Heart left ventricle (tissue), 16 donors: ENCODE measurements at regions of chr17 and their contacts with region 1.

Region 1: GRCh38 chr17:57033295-57033694 is 51.8 kb upstream of the AKAP1 start:
- DNase-seq: peak in 3 of 5 donors; percentile 44 to 49 (median 47)
- ATAC-seq: peak; percentile 64 to 90 (median 79)
- H3K4me3 ChIP-seq: no peak overlapping the region
- H3K27ac ChIP-seq: peak overlapping the region; percentile 43 to 95 (median 84)
- H3K4me1 ChIP-seq: peaks cover 0 to 41% (median 13%) of the 10 kb centered on the region in 12 donors
- H3K27me3 ChIP-seq: peaks cover 0 to 11% (median 0%) of the 10 kb centered on the region in 9 donors
- CTCF ChIP-seq: no peak
- POLR2A ChIP-seq: no peak

Region 2: DNA sequence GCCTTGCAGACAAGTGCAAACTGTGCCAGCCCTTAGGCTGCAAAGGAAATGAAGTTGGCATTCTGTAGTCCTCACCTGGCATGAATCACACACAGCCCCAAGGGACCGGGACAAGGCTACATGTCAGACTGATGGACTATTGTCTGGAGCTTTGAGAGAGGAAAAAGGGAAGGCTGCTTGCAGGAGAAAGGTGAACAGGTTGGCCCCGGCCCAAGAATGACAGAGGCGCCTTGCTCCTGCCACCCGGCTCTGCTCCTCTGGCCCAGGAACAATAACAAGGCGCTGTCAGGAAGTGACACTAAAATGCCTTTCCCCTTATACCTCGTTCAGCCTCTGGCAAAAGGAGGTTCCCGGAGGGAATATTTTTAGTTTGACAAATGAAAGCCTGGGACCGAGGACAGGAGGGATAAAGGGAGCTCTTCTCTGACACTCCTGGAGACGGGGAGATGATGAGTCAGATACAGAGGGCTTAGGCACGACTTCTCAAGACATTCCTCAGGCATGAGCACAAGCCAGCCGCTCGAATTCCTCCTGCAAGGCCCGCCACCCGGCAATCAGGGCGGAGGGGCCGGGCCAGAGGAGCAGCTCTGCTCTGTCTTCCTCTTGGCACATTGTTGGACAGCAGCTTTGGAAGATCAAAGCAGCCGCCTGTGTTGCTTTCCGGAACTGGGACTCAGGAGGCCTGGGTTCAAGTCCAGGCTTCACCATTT is 334.0 kb before region 1 on chr17:
- intact Hi-C with region 1: no loop called
- DNase-seq: peak in 2 of 5 donors; percentile 40 to 74
- ATAC-seq: peak in 3 of 4 donors; percentile 61 to 93 (median 79)
- H3K4me3 ChIP-seq: no peak overlapping the region
- H3K27ac ChIP-seq: no peak overlapping the region
- H3K4me1 ChIP-seq: peaks cover 0 to 18% (median 10%) of the 10 kb centered on the region in 12 donors
- H3K27me3 ChIP-seq: peaks cover 0 to 8% (median 0%) of the 10 kb centered on the region in 9 donors
- CTCF ChIP-seq: no peak
- POLR2A ChIP-seq: no peak

Region 3: GRCh38 chr17:57084802-57085447 is 51.6 kb after region 1 on chr17 and contains the start of gene AKAP1:
- intact Hi-C with region 1: loop called in 3 of 10 experiments (anchors 1 to 2 kb)
- DNase-seq: peak; percentile 96 to 99 (median 97)
- ATAC-seq: peak; percentile 89 to 95 (median 92)
- H3K4me3 ChIP-seq: peak within 1 kb of the TSS; percentile 63 to 98 (median 78)
- H3K27ac ChIP-seq: peak within 1 kb of the TSS; percentile 83 to 99 (median 95)
- H3K4me1 ChIP-seq: peaks cover 0 to 51% (median 27%) of the 10 kb centered on the region in 12 donors
- H3K27me3 ChIP-seq: no peaks in the 10 kb centered on the region
- CTCF ChIP-seq: peak in 11 of 12 donors; percentile 10 to 49 (median 30)
- POLR2A ChIP-seq: peak; percentile 31 to 95
- total RNA-seq, gene AKAP1: 77.4 to 240 (median 133) TPM

Region 4: DNA sequence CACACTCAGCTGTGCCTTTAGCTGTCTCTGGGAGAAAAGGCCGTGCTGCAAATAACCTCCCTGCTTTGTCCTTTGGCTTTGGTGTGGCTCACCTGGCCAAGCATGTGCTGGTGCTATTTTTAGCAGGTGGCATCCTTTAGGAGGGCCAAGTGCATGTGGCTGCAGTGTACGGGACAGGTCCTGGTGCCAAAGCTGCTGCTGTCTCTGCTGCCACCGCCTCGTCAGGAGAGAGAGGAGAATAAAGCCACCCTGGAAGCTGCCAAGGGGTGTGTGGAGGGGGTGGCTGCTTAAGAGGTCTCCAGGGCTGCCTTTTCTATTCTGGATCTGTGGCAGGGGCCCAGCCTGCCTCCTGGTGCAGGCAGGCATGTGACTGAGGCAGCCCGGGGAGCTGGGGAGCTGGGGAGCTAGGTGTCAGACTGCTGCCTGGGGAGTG is 57.9 kb after region 1 on chr17:
- intact Hi-C with region 1: loop called in 1 of 10 experiments (anchors 2 kb)
- DNase-seq: peak; percentile 83 to 94 (median 85)
- ATAC-seq: peak; percentile 92 to 95 (median 93)
- H3K4me3 ChIP-seq: peak overlapping the region in 1 of 12 donors; percentile 17
- H3K27ac ChIP-seq: peak overlapping the region; percentile 75 to 98 (median 92)
- H3K4me1 ChIP-seq: peaks cover 0 to 97% (median 65%) of the 10 kb centered on the region in 12 donors
- H3K27me3 ChIP-seq: no peaks in the 10 kb centered on the region
- CTCF ChIP-seq: no peak
- POLR2A ChIP-seq: no peak

Region 5: DNA sequence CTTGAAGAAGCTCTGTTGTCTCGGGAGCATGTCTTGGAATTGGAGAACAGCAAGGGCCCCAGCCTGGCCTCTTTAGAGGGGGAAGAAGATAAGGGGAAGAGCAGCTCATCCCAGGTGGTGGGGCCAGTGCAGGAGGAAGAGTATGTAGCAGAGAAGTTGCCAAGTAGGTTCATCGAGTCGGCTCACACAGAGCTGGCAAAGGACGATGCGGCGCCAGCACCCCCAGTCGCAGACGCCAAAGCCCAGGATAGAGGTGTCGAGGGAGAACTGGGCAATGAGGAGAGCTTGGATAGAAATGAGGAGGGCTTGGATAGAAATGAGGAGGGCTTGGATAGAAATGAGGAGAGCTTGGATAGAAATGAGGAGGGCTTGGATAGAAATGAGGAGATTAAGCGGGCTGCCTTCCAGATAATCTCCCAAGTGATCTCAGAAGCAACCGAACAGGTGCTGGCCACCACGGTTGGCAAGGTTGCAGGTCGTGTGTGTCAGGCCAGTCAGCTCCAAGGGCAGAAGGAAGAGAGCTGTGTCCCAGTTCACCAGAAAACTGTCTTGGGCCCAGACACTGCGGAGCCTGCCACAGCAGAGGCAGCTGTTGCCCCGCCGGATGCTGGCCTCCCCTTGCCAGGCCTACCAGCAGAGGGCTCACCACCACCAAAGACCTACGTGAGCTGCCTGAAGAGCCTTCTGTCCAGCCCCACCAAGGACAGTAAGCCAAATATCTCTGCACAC is 73.0 kb after region 1 on chr17:
- intact Hi-C with region 1: loop called in 1 of 10 experiments (anchors 5 kb)
- DNase-seq: peak in 2 of 5 donors; percentile 44 to 59
- ATAC-seq: peak in 3 of 4 donors; percentile 24 to 50 (median 35)
- H3K4me3 ChIP-seq: no peak overlapping the region
- H3K27ac ChIP-seq: peak overlapping the region in 9 of 12 donors; percentile 15 to 96 (median 88)
- H3K4me1 ChIP-seq: peaks cover 6 to 91% (median 57%) of the 10 kb centered on the region in 12 donors
- H3K27me3 ChIP-seq: no peaks in the 10 kb centered on the region
- CTCF ChIP-seq: peak; percentile 15 to 57 (median 41)
- POLR2A ChIP-seq: no peak